ENCODE measurements at regions of chr2 and their contacts with region 1.

Region 1: GRCh38 chr2:230614913-230615332 is 97.7 kb upstream of the CAB39 start:
- DNase-seq: no peak
- H3K4me3 ChIP-seq: no peak overlapping the region
- H3K27ac ChIP-seq: no peak overlapping the region
- H3K4me1 ChIP-seq: peaks cover 28% of the 10 kb centered on the region
- H3K27me3 ChIP-seq: no peaks in the 10 kb centered on the region
- CTCF ChIP-seq: no peak

Region 2: GRCh38 chr2:229921892-229922445 is 693.0 kb before region 1 on chr2 and contains the start of gene TRIP12:
- CTCF ChIA-PET with region 1: no interaction called
- POLR2A ChIA-PET with region 1: no interaction called
- intact Hi-C with region 1: loop called (anchors 10 kb)
- DNase-seq: peak; percentile 88 to 92
- H3K4me3 ChIP-seq: peak within 1 kb of the TSS; percentile 94
- H3K27ac ChIP-seq: peak within 1 kb of the TSS; percentile 80
- H3K4me1 ChIP-seq: peaks cover 19% of the 10 kb centered on the region
- H3K27me3 ChIP-seq: no peaks in the 10 kb centered on the region
- CTCF ChIP-seq: no peak
- total RNA-seq, gene TRIP12: 139 and 226 TPM in 2 replicates

Region 3: DNA sequence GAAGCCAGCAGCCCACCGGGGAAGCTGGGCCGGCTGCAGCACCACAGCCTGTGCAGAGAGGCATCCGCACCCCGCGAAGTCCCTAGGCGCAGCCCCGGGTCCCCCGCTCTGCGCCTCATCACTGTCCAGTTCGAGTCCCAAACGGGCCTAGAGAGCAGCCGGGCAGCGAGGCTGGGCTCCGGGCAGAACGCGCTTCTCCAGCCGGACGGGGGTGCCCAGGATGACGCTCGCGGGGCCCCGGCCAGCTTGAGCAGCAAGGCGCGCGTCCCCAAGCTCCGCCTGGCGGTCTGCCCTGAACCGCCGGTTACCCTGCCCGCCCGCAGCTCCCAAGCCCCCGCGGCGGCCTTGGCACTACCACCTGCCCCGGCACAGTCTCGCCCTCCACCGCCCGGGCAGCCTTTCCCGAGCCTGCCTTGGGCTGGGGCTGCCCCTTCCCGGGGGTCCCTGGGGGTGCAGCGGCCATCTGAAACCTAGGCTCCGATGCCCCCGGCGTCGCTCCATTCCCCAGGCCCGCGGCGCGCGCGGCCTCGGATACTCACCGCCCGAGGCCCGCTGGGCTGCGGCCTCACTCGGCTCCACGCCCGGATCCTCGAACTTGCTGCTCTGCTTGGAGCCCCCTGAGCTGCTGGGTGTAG is 546.8 kb before region 1 on chr2:
- CTCF ChIA-PET with region 1: interaction called, 3 read pairs
- POLR2A ChIA-PET with region 1: no interaction called
- intact Hi-C with region 1: loop called (anchors 5 kb)
- DNase-seq: peak in 1 of 2 experiments; percentile 42
- H3K4me3 ChIP-seq: peak overlapping the region; percentile 77
- H3K27ac ChIP-seq: no peak overlapping the region
- H3K4me1 ChIP-seq: no peaks in the 10 kb centered on the region
- H3K27me3 ChIP-seq: no peaks in the 10 kb centered on the region
- CTCF ChIP-seq: 0 out of 2 replicates have a peak, but pooled peaks have one; percentile 23

Region 4: DNA sequence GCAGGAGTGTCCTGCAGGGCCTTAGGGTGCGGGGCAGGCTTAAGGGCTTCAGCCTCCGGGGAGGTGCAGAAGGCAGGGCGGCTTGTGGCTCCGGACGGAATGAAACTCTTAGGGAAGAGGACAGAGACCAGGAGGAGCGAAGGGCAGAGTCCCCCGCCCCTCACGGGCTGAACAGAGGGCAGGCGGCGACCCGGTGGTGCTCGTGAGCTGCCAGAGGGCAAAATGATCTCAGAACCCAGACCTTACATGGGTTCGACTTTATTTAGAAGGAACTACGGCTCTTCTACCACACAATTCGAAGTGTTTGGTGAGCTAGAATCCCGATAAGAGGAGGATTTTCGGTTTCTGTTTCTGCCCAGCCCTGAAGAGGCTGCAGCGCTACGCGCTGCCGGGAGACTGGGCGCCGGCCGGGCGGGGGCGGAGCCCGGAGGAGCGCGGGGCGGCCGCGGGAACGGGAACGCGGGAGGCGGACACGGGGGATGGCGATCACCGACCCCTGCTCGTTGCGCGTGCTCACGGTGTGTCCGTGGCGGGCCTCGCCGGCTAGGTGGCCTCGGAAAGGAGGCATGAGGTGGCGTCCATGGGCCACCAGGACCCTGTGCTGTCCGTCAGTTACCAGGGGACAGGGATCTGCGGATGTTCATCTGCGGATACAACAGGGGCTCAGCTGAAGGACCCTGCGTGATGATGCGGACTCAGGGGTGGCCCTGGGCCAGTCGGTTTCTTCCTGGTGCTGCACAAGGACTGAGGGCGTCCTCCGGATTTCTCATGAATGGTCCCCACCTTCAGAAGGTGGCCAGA is 203.2 kb before region 1 on chr2:
- CTCF ChIA-PET with region 1: no interaction called
- POLR2A ChIA-PET with region 1: no interaction called
- intact Hi-C with region 1: loop called (anchors 10 kb)
- DNase-seq: peak in 1 of 2 experiments; percentile 55
- H3K4me3 ChIP-seq: peak overlapping the region; percentile 75
- H3K27ac ChIP-seq: no peak overlapping the region
- H3K4me1 ChIP-seq: peaks cover 11% of the 10 kb centered on the region
- H3K27me3 ChIP-seq: no peaks in the 10 kb centered on the region
- CTCF ChIP-seq: no peak

Region 5: DNA sequence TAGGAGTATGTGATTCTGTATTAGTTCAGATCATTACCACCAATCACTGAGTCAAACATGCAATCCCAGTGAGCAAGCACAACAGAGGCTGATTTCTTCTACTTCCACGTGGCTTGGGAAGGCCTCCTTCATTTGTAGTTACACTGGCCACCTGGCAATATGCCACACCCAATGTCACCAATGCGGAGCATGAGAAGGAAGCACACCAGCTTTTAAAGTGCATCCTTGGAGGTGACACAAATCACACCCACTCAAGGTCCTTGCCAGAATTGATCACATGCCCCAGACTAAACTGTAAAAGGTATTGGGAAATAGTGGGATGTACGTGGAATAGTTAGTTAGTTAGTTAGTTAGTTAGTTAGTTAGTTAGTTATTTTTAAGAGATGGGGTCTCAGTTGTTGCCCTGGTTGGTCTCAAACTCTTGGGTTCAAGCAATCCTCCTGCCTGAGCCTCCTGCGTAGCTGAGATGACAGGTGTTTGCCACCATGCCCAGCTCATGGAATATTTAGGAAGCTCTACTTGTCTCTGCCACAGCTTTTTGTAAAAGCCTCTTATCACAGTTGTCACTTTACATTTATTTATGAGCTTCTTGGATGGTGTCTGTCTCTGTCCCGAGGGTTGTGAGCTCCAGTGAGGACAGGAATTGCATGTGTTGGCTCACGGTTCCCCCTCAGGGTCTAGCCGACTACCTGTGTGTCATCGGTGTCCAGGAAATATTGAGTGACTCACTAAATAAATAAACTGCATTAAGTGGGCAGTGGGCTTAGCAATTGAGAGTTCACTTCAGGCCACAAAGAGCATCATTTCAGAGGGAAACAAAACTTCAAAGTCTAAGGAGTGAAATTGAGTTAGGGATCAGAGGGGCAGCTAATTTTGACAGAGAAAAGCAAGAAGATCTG is 69.6 kb after region 1 on chr2:
- CTCF ChIA-PET with region 1: interaction called, 11 read pairs
- POLR2A ChIA-PET with region 1: no interaction called
- intact Hi-C with region 1: no loop called
- DNase-seq: peak; percentile 79 to 93
- H3K4me3 ChIP-seq: no peak overlapping the region
- H3K27ac ChIP-seq: peak overlapping the region; percentile 94
- H3K4me1 ChIP-seq: peaks cover 67% of the 10 kb centered on the region
- H3K27me3 ChIP-seq: no peaks in the 10 kb centered on the region
- CTCF ChIP-seq: no peak

Region 6: DNA sequence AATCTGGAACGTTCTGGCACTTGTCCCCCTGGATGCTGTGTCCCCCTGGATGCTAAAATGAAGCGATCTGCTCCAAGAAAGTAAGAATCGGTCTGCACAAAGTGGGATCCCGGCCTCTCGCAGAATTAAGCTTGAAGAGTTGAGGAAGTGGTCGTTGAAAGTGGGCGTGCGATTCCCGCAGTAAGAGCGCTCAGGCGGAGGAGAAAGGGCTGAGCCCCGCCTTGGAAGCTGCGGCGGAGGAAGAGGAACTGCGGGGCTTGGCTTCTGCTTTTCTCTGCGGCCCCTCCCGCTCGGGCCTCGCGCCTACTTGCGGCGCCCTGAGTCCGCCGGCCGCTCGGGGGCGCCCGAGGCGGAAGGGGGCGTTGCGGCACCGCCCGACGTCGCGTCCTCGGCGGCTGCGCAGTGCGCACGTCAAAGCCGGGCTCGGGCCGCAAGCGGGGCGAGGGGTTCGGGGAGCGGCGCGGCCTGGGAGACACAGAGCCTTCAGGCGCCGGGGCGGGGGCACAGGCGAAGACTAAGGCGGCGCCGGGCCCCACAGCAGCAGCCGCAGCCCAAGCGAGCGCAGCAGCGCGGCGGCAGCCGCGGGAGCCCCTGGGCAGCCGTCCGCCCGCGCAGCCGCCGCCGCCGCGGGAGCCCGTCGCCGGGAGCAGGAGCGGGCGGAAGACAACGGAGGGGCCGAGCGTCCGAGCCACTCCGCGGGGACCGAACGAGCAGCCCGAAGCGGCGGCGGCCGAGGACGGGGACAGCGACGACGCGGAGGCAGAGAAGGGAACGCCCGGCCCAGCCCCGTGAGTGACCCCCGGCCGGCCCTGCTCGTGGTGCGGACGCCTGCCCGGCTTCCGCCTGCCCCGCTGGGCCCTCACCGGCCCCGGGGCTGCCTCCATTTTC is 97.8 kb after region 1 on chr2 and contains the start of gene CAB39:
- CTCF ChIA-PET with region 1: no interaction called
- POLR2A ChIA-PET with region 1: interaction called, 6 read pairs
- intact Hi-C with region 1: loop called (anchors 1 kb)
- DNase-seq: peak; percentile 73 to 90
- H3K4me3 ChIP-seq: peak within 1 kb of the TSS; percentile 87
- H3K27ac ChIP-seq: peak within 1 kb of the TSS; percentile 84
- H3K4me1 ChIP-seq: peaks cover 42% of the 10 kb centered on the region
- H3K27me3 ChIP-seq: no peaks in the 10 kb centered on the region
- CTCF ChIP-seq: peak; percentile 64; the same call in 1 of the 2 replicates
- total RNA-seq, gene CAB39: 70.9 and 86.1 TPM in 2 replicates

Region 7: GRCh38 chr2:230798769-230799399 is 184.0 kb after region 1 on chr2:
- CTCF ChIA-PET with region 1: no interaction called
- POLR2A ChIA-PET with region 1: interaction called, 3 read pairs
- intact Hi-C with region 1: loop called (anchors 2 kb)
- DNase-seq: peak in 1 of 2 experiments; percentile 70
- H3K4me3 ChIP-seq: no peak overlapping the region
- H3K27ac ChIP-seq: peak overlapping the region; percentile 30
- H3K4me1 ChIP-seq: peaks cover 47% of the 10 kb centered on the region
- H3K27me3 ChIP-seq: no peaks in the 10 kb centered on the region
- CTCF ChIP-seq: peak; percentile 82